SK-N-SH (cell line): ENCODE measurements at regions of chr9 and their contacts with region 1.

Region 1: DNA sequence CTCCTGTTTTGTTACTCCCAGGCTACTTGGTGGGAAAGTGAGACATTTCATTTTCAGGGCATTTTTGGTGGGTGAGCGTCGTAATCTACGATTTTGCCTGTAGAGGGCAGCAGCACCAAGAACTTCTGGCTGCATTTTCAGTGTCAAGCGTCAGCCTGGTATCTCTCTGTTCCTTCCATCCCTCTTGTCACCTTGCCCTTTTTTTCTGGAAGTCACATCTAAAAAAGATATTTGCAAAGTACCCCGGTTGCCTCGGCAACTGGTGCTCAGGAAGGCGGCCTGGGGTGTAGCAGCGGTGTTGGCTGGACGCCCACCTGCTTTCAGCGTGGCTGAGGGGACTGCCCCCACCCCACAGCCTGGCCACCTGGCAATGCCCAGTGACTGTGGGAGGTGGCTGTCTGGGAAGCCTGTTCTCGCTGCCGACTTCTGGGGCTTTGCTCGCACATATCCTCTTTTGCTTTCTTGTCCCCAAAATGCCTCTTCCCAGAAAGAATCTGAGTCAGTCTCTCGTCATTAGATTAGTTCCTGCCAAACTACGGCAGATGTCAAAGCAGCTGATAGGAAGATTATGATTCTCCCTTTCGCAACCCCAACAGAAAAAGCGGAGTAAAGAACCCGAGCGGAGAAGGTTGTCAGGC is 84.5 kb downstream of the ACER2 start:
- DNase-seq: peak; percentile 73
- H3K4me3 ChIP-seq: peak overlapping the region; percentile 45 to 67
- H3K27ac ChIP-seq: no peak overlapping the region
- H3K4me1 ChIP-seq: peaks cover 0 to 10% of the 10 kb centered on the region in 2 experiments; a peak in 2 of 4 replicates
- H3K27me3 ChIP-seq: no peaks in the 10 kb centered on the region
- CTCF ChIP-seq: peak; percentile 83
- EP300 ChIP-seq: no peak
- RAD21 ChIP-seq: peak; percentile 86

Region 2: DNA sequence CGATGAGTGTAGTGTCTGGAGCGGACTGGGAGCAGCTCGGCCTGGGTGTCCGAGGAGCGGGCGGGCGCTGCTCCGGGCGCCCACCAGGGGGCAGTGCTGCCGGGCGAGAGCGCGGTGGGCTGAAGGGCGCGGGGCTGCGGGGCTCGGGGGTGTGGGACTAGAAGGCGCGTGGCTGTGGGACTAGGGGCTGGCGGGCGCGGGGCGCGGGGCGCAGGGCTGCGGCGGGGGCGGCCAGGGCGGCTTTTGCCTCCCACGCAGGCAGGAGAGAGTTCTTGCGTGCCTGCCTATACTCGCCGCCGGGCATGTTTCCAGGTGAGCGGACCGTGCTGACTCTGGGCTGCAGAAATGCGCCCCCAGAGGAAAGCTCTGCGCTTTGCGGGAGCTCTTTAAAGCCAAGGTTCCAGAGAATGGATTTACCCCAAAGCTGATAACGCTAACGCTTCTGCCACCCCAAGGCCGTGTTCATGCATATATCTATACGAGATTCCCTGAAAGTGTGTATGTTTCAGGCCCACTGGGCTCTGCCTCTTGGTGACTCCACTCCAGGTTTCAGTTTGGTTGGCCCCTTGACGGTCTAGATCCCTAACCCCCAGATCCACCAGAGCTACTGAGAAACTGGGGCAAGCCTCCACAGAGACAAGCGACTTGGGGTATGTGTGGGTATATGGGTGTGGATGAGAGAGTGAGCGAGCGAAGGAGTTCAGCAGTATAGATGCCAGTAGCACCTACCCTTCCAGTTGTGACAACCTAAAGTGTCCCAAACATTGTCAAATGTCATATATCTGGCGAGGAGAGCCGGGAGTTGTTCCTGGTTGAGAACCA is 28.3 kb before region 1 on chr9:
- CTCF ChIA-PET with region 1: interaction called, 21 read pairs
- POLR2A ChIA-PET with region 1: no interaction called
- DNase-seq: peak; percentile 94
- H3K4me3 ChIP-seq: peak overlapping the region; percentile 46 to 70
- H3K27ac ChIP-seq: no peak overlapping the region
- H3K4me1 ChIP-seq: peaks cover 0 to 5% of the 10 kb centered on the region in 2 experiments; a peak in 1 of 4 replicates
- H3K27me3 ChIP-seq: no peaks in the 10 kb centered on the region
- CTCF ChIP-seq: peak; percentile 89
- EP300 ChIP-seq: no peak
- RAD21 ChIP-seq: peak; percentile 29; the same call in 1 of the 2 replicates

Region 3: GRCh38 chr9:19471737-19472648 is 21.3 kb before region 1 on chr9:
- CTCF ChIA-PET with region 1: interaction called, 18 read pairs
- POLR2A ChIA-PET with region 1: no interaction called
- DNase-seq: peak; percentile 80
- H3K4me3 ChIP-seq: peak overlapping the region; percentile 13 to 58
- H3K27ac ChIP-seq: no peak overlapping the region
- H3K4me1 ChIP-seq: peaks cover 0 to 10% of the 10 kb centered on the region in 2 experiments; a peak in 2 of 4 replicates
- H3K27me3 ChIP-seq: peaks cover 4% of the 10 kb centered on the region; the same call in 1 of the 2 replicates
- CTCF ChIP-seq: peak; percentile 81
- EP300 ChIP-seq: no peak
- RAD21 ChIP-seq: peak; percentile 82

Region 4: DNA sequence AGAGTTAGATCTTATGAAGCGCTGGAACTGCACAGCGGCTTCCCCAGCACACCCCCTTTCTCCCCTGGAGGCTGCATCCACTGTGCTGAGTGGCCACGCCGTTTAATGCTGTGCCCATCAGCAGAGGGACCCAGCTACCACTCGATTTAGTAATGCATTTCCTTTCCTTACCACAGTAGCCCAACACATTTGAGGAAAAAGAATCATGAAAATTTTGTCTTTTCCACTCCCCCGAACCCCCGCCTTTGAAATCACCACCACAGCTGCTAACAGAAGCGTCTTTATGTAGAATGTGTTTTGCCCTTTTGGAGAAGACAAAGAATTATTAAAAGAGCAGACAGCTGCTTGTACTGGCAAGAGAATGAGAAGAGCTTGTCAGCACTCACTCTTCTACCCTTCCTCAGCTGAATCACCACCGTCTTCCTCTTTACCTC is 11.3 kb before region 1 on chr9:
- CTCF ChIA-PET with region 1: interaction called, 16 read pairs
- POLR2A ChIA-PET with region 1: no interaction called
- DNase-seq: no peak
- H3K4me3 ChIP-seq: no peak overlapping the region
- H3K27ac ChIP-seq: no peak overlapping the region
- H3K4me1 ChIP-seq: no peaks in the 10 kb centered on the region
- H3K27me3 ChIP-seq: peaks cover 7% of the 10 kb centered on the region
- CTCF ChIP-seq: no peak
- EP300 ChIP-seq: no peak
- RAD21 ChIP-seq: no peak

Region 5: DNA sequence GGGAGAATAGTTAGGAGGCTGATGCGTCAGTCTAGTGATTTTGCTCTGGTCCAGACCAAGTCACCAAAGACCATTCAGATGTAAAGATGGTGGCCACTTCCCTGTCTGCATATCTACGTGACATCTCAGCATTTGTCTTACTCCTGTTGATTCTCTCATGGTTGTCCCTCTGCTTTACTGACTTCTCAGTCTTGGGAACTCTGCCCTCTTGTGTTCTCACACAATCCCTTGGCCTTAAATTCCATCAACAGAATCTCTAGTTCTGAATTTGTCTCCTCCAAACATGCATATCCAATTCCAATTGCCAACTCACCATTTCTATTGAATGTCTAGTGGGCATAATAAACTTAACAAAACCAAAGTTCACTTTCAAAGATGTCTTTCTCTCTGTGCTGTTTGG is 147.8 kb after region 1 on chr9:
- CTCF ChIA-PET with region 1: interaction called, 18 read pairs
- POLR2A ChIA-PET with region 1: no interaction called
- DNase-seq: no peak
- H3K4me3 ChIP-seq: no peak overlapping the region
- H3K27ac ChIP-seq: no peak overlapping the region
- H3K4me1 ChIP-seq: no peaks in the 10 kb centered on the region
- H3K27me3 ChIP-seq: no peaks in the 10 kb centered on the region
- CTCF ChIP-seq: 0 out of 2 replicates have a peak, but pooled peaks have one; percentile 19
- EP300 ChIP-seq: no peak
- RAD21 ChIP-seq: peak; percentile 48